Activated CD4-positive, alpha-beta T cell treated with anti-CD3 and anti-CD28 coated beads for 36 hours (primary cell): ENCODE measurements at regions of chr2 and their contacts with region 1.

Region 1: DNA sequence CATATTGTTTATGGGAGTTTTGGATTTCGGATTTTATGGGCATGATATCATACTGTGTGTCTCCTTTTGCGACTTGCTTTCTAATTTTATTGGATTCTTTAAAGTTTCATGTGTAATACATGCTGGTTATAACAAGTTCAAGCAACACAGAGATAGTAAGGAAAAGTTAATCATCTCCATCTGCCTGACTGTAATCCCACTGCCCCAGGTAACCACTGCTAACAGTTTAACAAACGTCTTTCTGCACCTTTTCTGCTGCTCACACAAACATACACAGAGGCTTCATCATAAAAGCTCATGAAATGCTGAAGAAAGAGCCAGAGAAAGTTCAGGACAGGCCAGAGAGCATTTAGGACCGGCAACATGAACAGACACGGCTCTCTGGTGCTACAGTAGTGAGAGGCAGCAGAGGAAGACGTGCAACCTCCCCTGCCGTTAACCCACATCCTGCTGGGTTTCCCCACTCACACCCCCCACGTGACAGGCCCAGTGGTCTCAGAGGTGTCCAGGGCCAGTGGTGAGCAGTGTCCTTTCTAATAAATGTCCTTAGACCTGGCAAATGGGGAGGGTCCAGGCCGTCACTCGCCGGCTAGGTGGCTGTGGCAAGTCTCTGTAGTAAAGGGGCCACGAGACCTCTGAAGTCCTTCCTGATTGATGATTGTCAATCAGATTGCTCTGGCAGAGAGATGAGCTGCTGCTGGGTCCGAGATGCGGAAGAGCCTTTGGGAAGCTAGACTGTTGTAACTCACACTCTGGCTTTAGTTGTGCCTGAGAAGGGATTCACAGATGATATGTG is 43.0 kb upstream of the SLC1A4 start:
- DNase-seq: peak; percentile 78
- ATAC-seq: peak; percentile 98
- H3K4me3 Mint-ChIP-seq: peak overlapping the region; percentile 50
- H3K27ac Mint-ChIP-seq: peak overlapping the region; percentile 89
- H3K4me1 Mint-ChIP-seq: peaks cover 30% of the 10 kb centered on the region
- H3K27me3 Mint-ChIP-seq: no peaks in the 10 kb centered on the region

Region 2: DNA sequence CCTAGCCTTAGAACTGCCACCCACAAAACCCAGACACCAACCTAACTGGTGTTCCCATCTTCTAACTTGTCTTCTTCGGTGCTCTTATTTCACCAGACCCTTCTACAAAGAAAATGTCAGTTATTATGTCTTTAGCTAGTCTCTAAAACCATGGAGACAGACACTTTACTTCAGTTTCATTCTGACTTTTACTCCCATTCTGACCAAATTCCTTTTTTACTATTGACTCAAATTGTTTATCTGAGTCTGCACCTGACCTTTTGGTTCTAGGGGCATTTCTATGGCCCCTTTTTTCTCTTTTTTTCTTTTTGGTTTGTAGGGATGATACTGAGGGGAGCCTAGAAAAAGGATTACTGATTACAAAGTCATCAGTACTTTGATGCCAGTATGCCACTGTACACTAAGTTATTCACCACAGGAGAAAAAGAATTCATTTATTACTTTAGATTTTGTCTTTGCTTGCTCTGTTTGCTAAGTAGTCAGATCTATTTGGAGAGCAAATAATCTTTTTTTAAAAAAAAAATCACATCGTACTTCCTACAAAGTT is 36.2 kb after region 1 on chr2:
- CTCF ChIA-PET with region 1: no interaction called
- POLR2A ChIA-PET with region 1: no interaction called
- intact Hi-C with region 1: loop called in 1 of 2 experiments (anchors 2 kb)
- DNase-seq: peak; percentile 31
- ATAC-seq: peak; percentile 81
- H3K4me3 Mint-ChIP-seq: no peak overlapping the region
- H3K27ac Mint-ChIP-seq: peak overlapping the region; percentile 52
- H3K4me1 Mint-ChIP-seq: peaks cover 30% of the 10 kb centered on the region
- H3K27me3 Mint-ChIP-seq: no peaks in the 10 kb centered on the region

Region 3: DNA sequence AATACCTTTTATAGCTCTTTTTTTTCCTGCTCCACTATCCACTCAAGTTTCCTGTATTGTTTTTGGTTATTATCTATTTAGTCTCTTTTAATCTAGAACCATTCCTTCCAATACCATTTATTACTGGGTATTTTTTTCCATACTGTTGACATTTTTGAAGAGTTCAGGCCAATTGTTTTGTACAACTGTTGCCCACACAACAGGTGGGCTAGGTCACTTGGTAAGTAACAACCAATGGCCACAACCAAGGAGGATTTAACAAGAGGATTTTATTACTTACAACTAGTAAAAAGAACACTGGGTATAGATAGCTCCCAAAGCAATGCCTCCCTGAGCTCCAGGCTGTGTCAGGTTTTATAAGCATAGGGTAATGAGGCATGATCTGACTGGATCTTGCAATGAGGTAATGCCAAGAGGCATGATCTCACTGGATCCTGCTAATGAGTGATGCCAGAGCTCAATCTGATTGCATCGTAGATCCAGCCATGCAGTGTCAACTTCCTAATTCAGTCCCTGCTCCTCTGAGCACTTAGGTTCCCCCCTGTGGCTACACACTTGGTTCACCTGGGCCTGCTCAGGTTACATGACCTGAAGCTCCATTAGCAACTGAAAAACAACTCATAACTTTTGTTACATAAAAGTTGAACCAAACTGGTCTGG is 103.0 kb after region 1 on chr2:
- CTCF ChIA-PET with region 1: no interaction called
- POLR2A ChIA-PET with region 1: no interaction called
- intact Hi-C with region 1: no loop called
- DNase-seq: peak; percentile 38
- ATAC-seq: peak; percentile 60
- H3K4me3 Mint-ChIP-seq: no peak overlapping the region
- H3K27ac Mint-ChIP-seq: no peak overlapping the region
- H3K4me1 Mint-ChIP-seq: peaks cover 14% of the 10 kb centered on the region
- H3K27me3 Mint-ChIP-seq: no peaks in the 10 kb centered on the region